Left ventricle myocardium inferior (tissue), 1 donor: ENCODE measurements at regions of chr7 and their contacts with region 1.

Region 1: GRCh38 chr7:106056513-106057203 is 55.5 kb downstream of the SYPL1 start:
- DNase-seq: peak; percentile 57
- H3K4me3 ChIP-seq: no peak overlapping the region
- H3K27ac ChIP-seq: no peak overlapping the region
- H3K4me1 ChIP-seq: peaks cover 22% of the 10 kb centered on the region
- H3K27me3 ChIP-seq: no peaks in the 10 kb centered on the region
- CTCF ChIP-seq: peak; percentile 92

Region 2: DNA sequence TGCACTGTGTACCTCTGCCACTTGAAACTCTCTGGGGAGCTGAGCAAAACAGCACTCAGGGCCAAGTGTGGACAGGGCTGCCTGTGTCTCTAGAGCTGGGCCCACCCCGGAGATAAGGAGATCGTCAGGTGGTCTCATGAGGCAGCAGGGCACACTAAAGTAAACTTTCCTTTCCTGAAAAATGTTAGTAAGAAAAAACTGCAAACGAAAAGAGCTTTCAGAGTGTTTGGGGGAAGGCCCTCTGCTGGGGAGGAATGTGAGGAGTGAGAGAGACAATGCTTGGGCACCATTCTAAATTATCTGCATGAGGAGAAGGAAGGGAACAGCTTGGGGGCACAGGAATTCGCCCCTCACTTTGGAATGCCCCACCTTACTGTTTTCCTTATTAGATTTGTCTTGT is 308.0 kb before region 1 on chr7:
- intact Hi-C with region 1: no loop called
- DNase-seq: no peak
- H3K4me3 ChIP-seq: no peak overlapping the region
- H3K27ac ChIP-seq: no peak overlapping the region
- H3K4me1 ChIP-seq: no peaks in the 10 kb centered on the region
- H3K27me3 ChIP-seq: no peaks in the 10 kb centered on the region
- CTCF ChIP-seq: no peak

Region 3: GRCh38 chr7:106153891-106154449 is 97.3 kb after region 1 on chr7:
- intact Hi-C with region 1: loop called (anchors 2 kb)
- DNase-seq: peak; percentile 78
- H3K4me3 ChIP-seq: peak overlapping the region; percentile 3
- H3K27ac ChIP-seq: no peak overlapping the region
- H3K4me1 ChIP-seq: peaks cover 13% of the 10 kb centered on the region
- H3K27me3 ChIP-seq: no peaks in the 10 kb centered on the region
- CTCF ChIP-seq: peak; percentile 96

Region 4: DNA sequence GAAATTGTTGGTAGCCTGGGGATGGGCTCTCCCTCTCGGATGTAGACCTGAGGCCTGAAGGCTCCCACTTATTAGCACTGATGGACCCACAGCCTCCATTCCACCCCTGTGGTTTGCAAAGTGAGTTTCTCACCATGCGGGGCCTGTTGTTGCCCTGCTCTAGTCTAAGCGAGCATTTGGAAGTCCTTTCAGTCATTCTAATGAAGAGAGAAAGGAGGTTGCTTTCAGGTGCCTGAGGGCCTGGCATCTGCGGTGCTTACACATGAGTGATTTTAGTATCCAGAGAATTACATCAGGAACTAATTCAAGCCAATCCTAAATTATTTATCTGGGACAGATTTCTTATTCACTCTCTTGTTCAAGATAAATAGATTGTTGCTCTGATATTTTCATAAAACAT is 166.5 kb after region 1 on chr7:
- intact Hi-C with region 1: no loop called
- DNase-seq: no peak
- H3K4me3 ChIP-seq: no peak overlapping the region
- H3K27ac ChIP-seq: peak overlapping the region; percentile 34
- H3K4me1 ChIP-seq: peaks cover 32% of the 10 kb centered on the region
- H3K27me3 ChIP-seq: no peaks in the 10 kb centered on the region
- CTCF ChIP-seq: no peak